ENCODE measurements at regions of chr16 and their contacts with region 1.

Region 1: GRCh38 chr16:20300312-20301097 is 26.8 kb downstream of the GP2 start:
- DNase-seq: peak; percentile 36 to 68 (median 61)
- H3K4me3 ChIP-seq: no peak overlapping the region
- H3K27ac ChIP-seq: no peak overlapping the region
- H3K4me1 ChIP-seq: no peaks in the 10 kb centered on the region
- H3K27me3 ChIP-seq: peaks cover 0 to 9% (median 0%) of the 10 kb centered on the region in 5 experiments

Region 2: GRCh38 chr16:19907161-19907992 is 393.1 kb before region 1 on chr16:
- CTCF ChIA-PET with region 1: interaction called, 38 read pairs
- POLR2A ChIA-PET with region 1: no interaction called
- DNase-seq: peak; percentile 66 to 86 (median 82)
- H3K4me3 ChIP-seq: no peak overlapping the region
- H3K27ac ChIP-seq: no peak overlapping the region
- H3K4me1 ChIP-seq: peaks cover 0 to 3% (median 0%) of the 10 kb centered on the region in 4 experiments
- H3K27me3 ChIP-seq: peaks cover 0 to 3% (median 0%) of the 10 kb centered on the region in 5 experiments

Measured in common myeloid progenitor, CD34-positive (primary cell).